ENCODE measurements at regions of chr3 and their contacts with region 1.

Region 1: GRCh38 chr3:160003520-160004128 is 15.0 kb downstream of the IL12A start:
- DNase-seq: peak in 1 of 9 donors; percentile 19
- ATAC-seq: peak; percentile 73
- H3K4me3 ChIP-seq: no peak overlapping the region
- H3K4me3 Mint-ChIP-seq: no peak overlapping the region
- H3K27ac ChIP-seq: no peak overlapping the region
- H3K27ac Mint-ChIP-seq: peak overlapping the region in 1 of 9 donors; percentile 10
- H3K4me1 ChIP-seq: no peaks in the 10 kb centered on the region
- H3K4me1 Mint-ChIP-seq: peaks cover 0 to 16% (median 0%) of the 10 kb centered on the region in 7 donors
- H3K27me3 ChIP-seq: no peaks in the 10 kb centered on the region
- H3K27me3 Mint-ChIP-seq: peaks cover 0 to 9% (median 0%) of the 10 kb centered on the region in 5 donors

Region 2: GRCh38 chr3:158845765-158846350 is 1157.8 kb before region 1 on chr3:
- CTCF ChIA-PET with region 1: no interaction called
- POLR2A ChIA-PET with region 1: no interaction called
- intact Hi-C with region 1: loop called in 1 of 2 experiments (anchors 10 kb)
- DNase-seq: peak in 7 of 9 donors; percentile 14 to 57 (median 44)
- ATAC-seq: peak; percentile 56
- H3K4me3 ChIP-seq: no peak overlapping the region
- H3K4me3 Mint-ChIP-seq: peak overlapping the region in 1 of 10 donors; percentile 26
- H3K27ac ChIP-seq: no peak overlapping the region
- H3K27ac Mint-ChIP-seq: peak overlapping the region in 2 of 9 donors; percentile 10 to 38
- H3K4me1 ChIP-seq: no peaks in the 10 kb centered on the region
- H3K4me1 Mint-ChIP-seq: peaks cover 0 to 22% (median 12%) of the 10 kb centered on the region in 7 donors
- H3K27me3 ChIP-seq: no peaks in the 10 kb centered on the region
- H3K27me3 Mint-ChIP-seq: no peaks in the 10 kb centered on the region

Region 3: DNA sequence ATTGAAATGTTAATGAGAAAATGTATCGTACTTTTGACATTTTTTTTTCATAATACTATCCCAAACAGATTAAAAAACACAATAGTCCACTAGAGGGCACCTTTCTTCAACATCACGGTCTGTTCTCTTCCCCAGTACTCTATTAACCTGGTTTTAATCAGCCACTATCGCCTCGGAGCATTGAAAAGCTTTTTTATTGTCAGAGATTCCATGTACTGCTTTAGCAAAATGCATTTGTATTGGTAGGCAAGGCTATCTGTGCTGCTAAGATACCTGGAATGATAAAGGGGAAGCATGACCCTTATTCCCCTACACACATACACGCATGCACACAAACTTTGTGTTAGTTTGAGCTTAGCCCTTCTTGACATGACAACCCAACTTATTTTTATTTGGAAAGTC is 175.1 kb before region 1 on chr3:
- CTCF ChIA-PET with region 1: no interaction called
- POLR2A ChIA-PET with region 1: no interaction called
- intact Hi-C with region 1: loop called in 1 of 2 experiments (anchors 2 kb)
- DNase-seq: peak in 2 of 9 donors; percentile 7 to 9
- ATAC-seq: peak; percentile 59
- H3K4me3 ChIP-seq: no peak overlapping the region
- H3K4me3 Mint-ChIP-seq: no peak overlapping the region
- H3K27ac ChIP-seq: no peak overlapping the region
- H3K27ac Mint-ChIP-seq: no peak overlapping the region
- H3K4me1 ChIP-seq: peaks cover 0 to 3% of the 10 kb centered on the region in 2 donors
- H3K4me1 Mint-ChIP-seq: peaks cover 0 to 3% (median 0%) of the 10 kb centered on the region in 7 donors
- H3K27me3 ChIP-seq: no peaks in the 10 kb centered on the region
- H3K27me3 Mint-ChIP-seq: peaks cover 0 to 7% (median 7%) of the 10 kb centered on the region in 5 donors

Region 4: DNA sequence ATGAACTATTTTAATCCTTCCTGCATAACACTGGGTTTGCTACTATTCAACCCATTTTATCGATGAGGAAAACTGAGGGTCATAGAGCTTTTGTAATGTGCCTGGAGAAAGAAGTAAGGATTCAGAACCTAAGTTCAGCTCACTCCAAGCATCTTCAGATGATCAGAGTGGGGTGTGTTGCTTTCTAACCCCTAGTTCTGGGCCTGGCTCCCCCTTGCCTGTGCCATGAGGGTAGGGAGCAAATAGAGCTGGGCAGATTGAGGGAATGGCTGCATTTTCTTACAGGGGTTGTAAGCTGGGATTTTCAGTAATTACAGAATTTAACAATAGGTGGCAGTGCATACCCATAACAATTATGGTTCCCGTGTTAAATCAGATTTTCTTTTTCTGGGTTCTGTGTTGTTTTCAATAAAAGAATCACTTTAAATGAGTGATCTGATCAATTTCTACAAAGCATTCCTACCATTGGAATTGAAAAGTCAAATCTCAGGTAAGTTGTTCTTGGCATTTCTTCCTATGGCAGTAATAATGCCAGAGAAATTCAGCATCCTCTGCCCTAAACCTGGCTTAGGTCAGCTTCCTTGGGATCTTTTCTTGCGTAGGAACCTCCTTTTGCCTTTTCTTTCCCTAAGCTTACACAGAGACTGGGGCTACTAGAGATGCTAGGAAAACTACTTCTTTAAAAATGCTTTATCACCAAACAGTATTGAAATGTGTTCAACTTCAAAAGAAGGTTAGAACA is 118.8 kb before region 1 on chr3:
- CTCF ChIA-PET with region 1: no interaction called
- POLR2A ChIA-PET with region 1: no interaction called
- intact Hi-C with region 1: loop called (anchors 1 to 2 kb)
- DNase-seq: peak in 3 of 9 donors; percentile 3 to 16 (median 9)
- ATAC-seq: peak; percentile 57
- H3K4me3 ChIP-seq: no peak overlapping the region
- H3K4me3 Mint-ChIP-seq: no peak overlapping the region
- H3K27ac ChIP-seq: no peak overlapping the region
- H3K27ac Mint-ChIP-seq: no peak overlapping the region
- H3K4me1 ChIP-seq: no peaks in the 10 kb centered on the region
- H3K4me1 Mint-ChIP-seq: no peaks in the 10 kb centered on the region
- H3K27me3 ChIP-seq: no peaks in the 10 kb centered on the region
- H3K27me3 Mint-ChIP-seq: peaks cover 0 to 24% (median 15%) of the 10 kb centered on the region in 5 donors

Region 5: GRCh38 chr3:159988617-159989271 is 14.9 kb before region 1 on chr3 and contains the start of gene IL12A:
- CTCF ChIA-PET with region 1: interaction called, 3 read pairs
- POLR2A ChIA-PET with region 1: no interaction called
- intact Hi-C with region 1: loop called (anchors 1 kb)
- DNase-seq: peak; percentile 59 to 85 (median 75)
- ATAC-seq: peak; percentile 98
- H3K4me3 ChIP-seq: peak within 1 kb of the TSS; percentile 56
- H3K4me3 Mint-ChIP-seq: peak within 1 kb of the TSS; percentile 82 to 89 (median 84)
- H3K27ac ChIP-seq: peak within 1 kb of the TSS; percentile 32
- H3K27ac Mint-ChIP-seq: peak within 1 kb of the TSS in 5 of 9 donors; percentile 58 to 65 (median 62)
- H3K4me1 ChIP-seq: peaks cover 6 to 9% of the 10 kb centered on the region in 2 donors
- H3K4me1 Mint-ChIP-seq: peaks cover 6 to 33% (median 15%) of the 10 kb centered on the region in 7 donors
- H3K27me3 ChIP-seq: no peaks in the 10 kb centered on the region
- H3K27me3 Mint-ChIP-seq: peaks cover 0 to 24% (median 10%) of the 10 kb centered on the region in 5 donors
- total RNA-seq, gene IL12A: 0.40 to 1.8 (median 1.3) TPM

Region 6: GRCh38 chr3:160081968-160082533 is 78.4 kb after region 1 on chr3:
- CTCF ChIA-PET with region 1: no interaction called
- POLR2A ChIA-PET with region 1: no interaction called
- intact Hi-C with region 1: no loop called
- DNase-seq: no peak
- ATAC-seq: no peak
- H3K4me3 ChIP-seq: no peak overlapping the region
- H3K4me3 Mint-ChIP-seq: no peak overlapping the region
- H3K27ac ChIP-seq: no peak overlapping the region
- H3K27ac Mint-ChIP-seq: no peak overlapping the region
- H3K4me1 ChIP-seq: no peaks in the 10 kb centered on the region
- H3K4me1 Mint-ChIP-seq: no peaks in the 10 kb centered on the region
- H3K27me3 ChIP-seq: no peaks in the 10 kb centered on the region
- H3K27me3 Mint-ChIP-seq: no peaks in the 10 kb centered on the region

Measured in naive thymus-derived CD4-positive, alpha-beta T cell (primary cell).